Activated T-helper 1 cell treated with anti-CD3 and anti-CD28 coated beads, Interleukin-12 subunit alpha, Interleukin-12 subunit beta, Interleukin-2, Interleukin-4 antibody, amounts not matched to agents 30 ng/mL and 10 ng/mL and 1 ng/mL, durations not matched to agents 14 hours and 24 hours and 36 hours (primary cell): ENCODE measurements at regions of chr18 and their contacts with region 1.

Region 1: DNA sequence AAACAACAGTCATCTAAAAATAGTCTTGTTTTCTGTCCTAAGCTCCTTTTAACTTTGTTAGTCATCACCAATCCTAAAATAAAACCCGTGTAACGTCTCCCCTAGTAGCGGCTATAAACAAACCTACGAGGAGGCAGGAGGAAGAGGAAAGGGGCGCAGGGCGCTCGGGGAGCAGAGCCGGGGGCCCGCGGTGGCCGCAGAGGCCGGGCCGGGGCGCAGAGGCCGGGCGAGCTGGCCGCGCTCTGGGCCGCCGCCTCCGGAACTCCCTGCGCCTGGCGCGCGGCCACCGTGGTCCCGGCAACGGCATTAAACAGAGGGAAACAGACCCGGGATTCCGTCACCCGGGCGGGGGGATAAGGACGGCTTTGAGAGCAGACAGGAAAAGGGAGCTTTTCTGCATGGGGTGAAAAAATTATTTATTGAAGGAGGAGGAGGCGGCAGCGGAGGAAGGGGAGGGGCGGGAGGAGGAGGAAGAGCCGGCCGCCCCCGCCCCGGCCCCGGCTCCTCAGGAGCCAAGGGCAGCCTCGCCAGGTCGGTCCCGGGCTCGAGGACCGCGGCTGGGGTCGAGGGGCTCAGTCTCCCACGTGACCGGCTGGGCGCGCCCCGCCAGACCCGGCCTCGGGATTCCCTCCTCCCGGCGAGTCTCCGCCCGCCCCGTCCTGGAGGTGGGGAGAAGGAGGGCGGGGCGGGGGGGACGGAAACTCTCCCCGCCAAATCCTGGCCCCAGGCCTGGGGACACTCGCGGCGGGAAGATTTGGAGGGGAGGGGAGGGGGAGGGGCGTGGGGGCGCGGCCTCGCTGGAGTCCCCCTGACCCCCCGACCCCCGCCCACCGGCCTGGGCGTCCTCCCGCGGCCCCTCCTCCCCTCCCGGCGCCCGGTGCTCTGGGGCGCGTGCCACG is 1.8 kb upstream of the NFATC1 start:
- DNase-seq: peak; percentile 31
- H3K4me3 Mint-ChIP-seq: peak overlapping the region; percentile 85
- H3K27ac Mint-ChIP-seq: peak overlapping the region; percentile 90
- H3K4me1 Mint-ChIP-seq: peaks cover 21% of the 10 kb centered on the region
- H3K27me3 Mint-ChIP-seq: peaks cover 24% of the 10 kb centered on the region

Region 2: DNA sequence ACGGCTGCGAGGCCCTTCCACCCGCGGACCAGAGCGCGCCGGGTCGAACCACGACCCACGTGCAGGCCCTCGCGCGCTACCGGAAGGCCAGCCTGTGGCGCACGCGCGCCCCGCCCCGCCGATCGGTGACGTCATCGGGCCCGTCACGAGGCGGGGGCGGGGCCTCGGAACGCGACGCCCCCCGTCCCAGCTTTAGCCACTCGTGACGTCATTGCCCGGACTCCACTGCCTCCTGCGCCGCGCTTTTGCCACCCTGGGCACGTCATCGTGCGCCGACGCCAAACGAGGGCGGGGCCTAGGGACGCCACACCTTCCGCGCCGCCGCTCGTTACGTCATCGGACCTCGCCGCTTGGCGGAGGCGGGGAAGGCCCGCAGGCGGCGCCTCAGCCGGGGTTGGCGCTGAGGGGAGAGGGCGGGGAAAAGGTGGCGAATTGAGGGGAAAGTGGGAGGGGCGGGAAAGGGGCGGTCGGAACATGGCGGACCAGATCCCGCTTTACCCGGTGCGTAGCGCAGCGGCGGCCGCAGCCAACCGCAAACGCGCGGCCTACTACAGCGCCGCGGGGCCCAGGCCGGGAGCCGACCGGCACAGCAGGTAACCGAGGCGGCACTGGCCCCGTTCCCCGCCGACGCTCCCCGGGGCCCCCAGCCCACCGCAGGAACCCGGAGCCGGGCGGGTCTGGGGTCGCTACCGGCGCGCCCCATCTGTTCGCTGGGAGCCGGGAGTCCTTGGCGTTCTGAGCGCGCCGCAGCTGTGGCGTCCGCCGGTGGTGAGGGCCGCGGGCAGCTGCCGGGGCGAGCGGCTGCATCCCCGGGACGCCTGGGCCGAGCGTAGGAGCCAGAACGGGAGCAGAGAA is 324.7 kb before region 1 on chr18 and contains the start of gene ATP9B:
- intact Hi-C with region 1: loop called (anchors 2 kb)
- DNase-seq: peak; percentile 99
- H3K4me3 Mint-ChIP-seq: peak within 1 kb of the TSS; percentile 89
- H3K27ac Mint-ChIP-seq: peak within 1 kb of the TSS; percentile 98
- H3K4me1 Mint-ChIP-seq: peaks cover 38% of the 10 kb centered on the region
- H3K27me3 Mint-ChIP-seq: peaks cover 9% of the 10 kb centered on the region
- total RNA-seq, gene ATP9B: 26.1 and 31.4 TPM in 2 replicates

Region 3: DNA sequence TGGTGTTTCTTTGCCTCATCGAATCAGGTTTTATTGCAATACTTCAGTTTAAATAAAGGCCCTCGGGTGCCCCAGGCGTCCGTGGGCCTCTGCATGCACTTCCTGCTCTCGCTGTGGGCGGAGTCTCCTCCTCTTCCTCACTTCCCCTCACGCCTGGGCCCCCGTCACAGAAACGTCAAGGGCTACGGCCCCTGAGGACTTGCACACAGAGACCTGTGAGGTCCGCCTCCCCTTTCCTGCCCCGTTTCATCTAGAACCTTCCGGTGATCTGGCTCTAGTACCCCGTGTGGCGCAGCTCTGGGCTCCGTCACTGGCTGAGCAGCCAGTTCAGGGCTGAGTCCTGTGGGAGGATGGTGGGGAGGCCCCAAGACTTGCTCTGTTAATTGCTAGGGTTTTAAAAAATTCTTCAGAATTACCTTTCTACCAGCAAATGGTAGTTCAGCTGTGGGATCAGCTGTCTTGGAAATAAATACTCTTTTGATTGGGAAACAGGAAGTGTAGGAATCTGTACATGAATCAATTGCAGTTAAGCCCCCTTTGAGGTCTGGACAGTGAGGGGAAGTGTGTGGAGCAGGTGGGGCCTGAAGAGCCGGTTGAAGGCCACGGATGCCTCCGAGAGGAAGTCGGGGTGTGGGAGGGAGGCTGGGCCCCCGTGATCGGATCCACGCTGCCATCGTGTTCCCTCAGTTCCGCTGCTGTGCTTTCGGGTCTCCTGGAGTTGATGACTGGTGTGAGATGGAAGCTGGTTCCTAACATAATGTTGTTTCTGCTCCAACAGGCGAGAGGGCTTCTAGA is 12.1 kb after region 1 on chr18:
- intact Hi-C with region 1: loop called (anchors 1 kb)
- DNase-seq: peak; percentile 84
- H3K4me3 Mint-ChIP-seq: peak overlapping the region; percentile 84
- H3K27ac Mint-ChIP-seq: peak overlapping the region; percentile 97
- H3K4me1 Mint-ChIP-seq: peaks cover 57% of the 10 kb centered on the region
- H3K27me3 Mint-ChIP-seq: no peaks in the 10 kb centered on the region

Region 4: GRCh38 chr18:79447703-79448367 is 54.0 kb after region 1 on chr18:
- intact Hi-C with region 1: loop called (anchors 2 kb)
- DNase-seq: no peak
- H3K4me3 Mint-ChIP-seq: no peak overlapping the region
- H3K27ac Mint-ChIP-seq: peak overlapping the region; percentile 31
- H3K4me1 Mint-ChIP-seq: peaks cover 8% of the 10 kb centered on the region
- H3K27me3 Mint-ChIP-seq: no peaks in the 10 kb centered on the region

Region 5: GRCh38 chr18:79672490-79673276 is 278.8 kb after region 1 on chr18:
- intact Hi-C with region 1: no loop called
- DNase-seq: no peak
- H3K4me3 Mint-ChIP-seq: no peak overlapping the region
- H3K27ac Mint-ChIP-seq: no peak overlapping the region
- H3K4me1 Mint-ChIP-seq: peaks cover 11% of the 10 kb centered on the region
- H3K27me3 Mint-ChIP-seq: no peaks in the 10 kb centered on the region

Region 6: DNA sequence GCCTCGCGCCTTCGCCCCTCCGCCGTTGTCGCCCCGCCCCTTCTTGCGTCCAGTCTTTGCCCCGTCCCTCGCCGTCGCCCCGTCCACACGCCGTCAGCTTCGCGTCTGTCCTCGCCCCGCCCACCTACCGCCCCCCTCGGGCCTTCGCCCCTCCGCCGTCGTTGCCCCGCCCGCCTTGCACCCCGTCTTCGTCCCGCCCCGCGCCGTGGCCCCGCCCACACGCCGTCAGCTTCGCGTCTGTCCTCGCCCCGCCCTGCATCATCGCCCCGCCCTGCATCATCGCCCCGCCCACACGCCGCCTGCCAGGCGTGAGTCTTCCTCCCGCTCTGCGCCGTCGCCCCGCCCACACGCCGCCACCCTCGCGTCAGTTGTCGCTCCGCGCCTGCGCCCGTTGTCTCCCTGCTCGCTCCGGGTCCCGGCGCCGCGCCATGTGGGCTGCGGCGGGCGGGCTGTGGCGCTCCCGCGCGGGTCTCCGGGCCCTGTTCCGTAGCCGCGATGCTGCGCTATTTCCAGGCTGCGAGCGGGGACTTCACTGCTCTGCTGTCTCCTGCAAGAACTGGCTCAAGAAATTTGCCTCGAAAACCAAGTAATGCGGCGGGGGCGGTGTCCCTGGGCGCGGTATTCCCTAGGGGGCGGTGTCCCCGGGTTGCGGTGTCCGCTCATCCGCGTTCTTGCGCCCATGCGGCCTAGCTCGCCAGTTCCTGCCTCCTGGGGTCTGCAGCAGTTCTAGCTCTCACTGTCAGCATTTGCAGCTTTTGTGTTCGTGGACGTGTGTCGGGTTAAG is 640.4 kb after region 1 on chr18 and contains the start of gene RBFA:
- intact Hi-C with region 1: loop called (anchors 2 kb)
- DNase-seq: peak; percentile 98
- H3K4me3 Mint-ChIP-seq: peak within 1 kb of the TSS; percentile 87
- H3K27ac Mint-ChIP-seq: peak within 1 kb of the TSS; percentile 88
- H3K4me1 Mint-ChIP-seq: peaks cover 25% of the 10 kb centered on the region
- H3K27me3 Mint-ChIP-seq: peaks cover 4% of the 10 kb centered on the region
- total RNA-seq, gene RBFA: 48.5 and 50.3 TPM in 2 replicates